Thyroid gland (tissue), 4 donors: ENCODE measurements at regions of chr5 and their contacts with region 1.

Region 1: GRCh38 chr5:93582677-93583438 is at the start of gene NR2F1:
- DNase-seq: peak in 1 of 2 donors; percentile 50
- H3K4me3 ChIP-seq: peak within 1 kb of the TSS in 2 of 3 donors; percentile 41 to 45
- H3K27ac ChIP-seq: peak within 1 kb of the TSS; percentile 48 to 71 (median 60)
- H3K4me1 ChIP-seq: peaks cover 23 to 26% of the 10 kb centered on the region in 2 donors
- H3K27me3 ChIP-seq: peaks cover 23% of the 10 kb centered on the region
- CTCF ChIP-seq: peak in 5 of 6 experiments; percentile 28 to 76 (median 39)
- POLR2A ChIP-seq: peak in 1 of 2 donors; percentile 27
- total RNA-seq, gene NR2F1: 25.8 to 43.3 (median 37.5) TPM

Region 2: GRCh38 chr5:93088592-93089389 is 494.1 kb before region 1 on chr5:
- intact Hi-C with region 1: loop called (anchors 10 kb)
- DNase-seq: no peak
- H3K4me3 ChIP-seq: no peak overlapping the region
- H3K27ac ChIP-seq: no peak overlapping the region
- H3K4me1 ChIP-seq: no peaks in the 10 kb centered on the region
- H3K27me3 ChIP-seq: no peaks in the 10 kb centered on the region
- CTCF ChIP-seq: no peak
- POLR2A ChIP-seq: no peak

Region 3: GRCh38 chr5:93519740-93520139 is 63.1 kb before region 1 on chr5:
- intact Hi-C with region 1: no loop called
- DNase-seq: no peak
- H3K4me3 ChIP-seq: no peak overlapping the region
- H3K27ac ChIP-seq: no peak overlapping the region
- H3K4me1 ChIP-seq: no peaks in the 10 kb centered on the region
- H3K27me3 ChIP-seq: no peaks in the 10 kb centered on the region
- CTCF ChIP-seq: no peak
- POLR2A ChIP-seq: no peak

Region 4: GRCh38 chr5:93874080-93874479 is 291.2 kb after region 1 on chr5:
- intact Hi-C with region 1: no loop called
- DNase-seq: no peak
- H3K4me3 ChIP-seq: no peak overlapping the region
- H3K27ac ChIP-seq: no peak overlapping the region
- H3K4me1 ChIP-seq: no peaks in the 10 kb centered on the region
- H3K27me3 ChIP-seq: no peaks in the 10 kb centered on the region
- CTCF ChIP-seq: no peak
- POLR2A ChIP-seq: no peak

Region 5: DNA sequence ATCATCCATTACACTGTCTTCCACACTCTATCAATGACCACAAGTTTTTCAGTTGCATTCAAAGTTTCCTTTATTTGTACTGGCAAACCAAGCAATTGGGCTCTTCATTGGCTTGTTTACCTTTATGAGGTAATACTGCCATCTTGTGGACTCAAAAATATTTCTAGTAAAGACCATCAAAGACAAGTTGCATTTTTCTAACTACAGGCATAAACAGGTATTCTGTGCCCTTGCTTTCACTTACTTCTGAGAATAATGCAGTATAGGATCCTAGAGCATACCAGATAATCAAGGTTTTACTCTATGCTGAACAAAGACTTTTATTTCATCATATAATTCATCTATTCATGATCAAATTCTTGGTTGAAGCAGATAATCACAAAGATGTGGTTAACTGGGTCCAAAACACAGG is 332.3 kb after region 1 on chr5:
- intact Hi-C with region 1: loop called (anchors 10 kb)
- DNase-seq: no peak
- H3K4me3 ChIP-seq: no peak overlapping the region
- H3K27ac ChIP-seq: no peak overlapping the region
- H3K4me1 ChIP-seq: no peaks in the 10 kb centered on the region
- H3K27me3 ChIP-seq: no peaks in the 10 kb centered on the region
- CTCF ChIP-seq: peak in 5 of 6 experiments; percentile 19 to 76 (median 60)
- POLR2A ChIP-seq: no peak